ENCODE measurements at regions of chr4 and their contacts with region 1.

Region 1: GRCh38 chr4:39181905-39182638 is at the start of gene WDR19:
- DNase-seq: peak; percentile 91 to 98 (median 98)
- ATAC-seq: peak; percentile 98
- H3K4me3 ChIP-seq: peak within 1 kb of the TSS; percentile 91
- H3K4me3 Mint-ChIP-seq: no peak within 1 kb of the TSS
- H3K27ac ChIP-seq: peak within 1 kb of the TSS; percentile 72
- H3K27ac Mint-ChIP-seq: peak within 1 kb of the TSS in 4 of 9 donors; percentile 8 to 47 (median 21)
- H3K4me1 ChIP-seq: peaks cover 3 to 12% of the 10 kb centered on the region in 2 donors
- H3K4me1 Mint-ChIP-seq: peaks cover 0 to 12% (median 9%) of the 10 kb centered on the region in 7 donors
- H3K27me3 ChIP-seq: no peaks in the 10 kb centered on the region
- H3K27me3 Mint-ChIP-seq: peaks cover 0 to 16% (median 3%) of the 10 kb centered on the region in 5 donors
- total RNA-seq, gene WDR19: 14.0 to 44.3 (median 15.4) TPM

Region 2: DNA sequence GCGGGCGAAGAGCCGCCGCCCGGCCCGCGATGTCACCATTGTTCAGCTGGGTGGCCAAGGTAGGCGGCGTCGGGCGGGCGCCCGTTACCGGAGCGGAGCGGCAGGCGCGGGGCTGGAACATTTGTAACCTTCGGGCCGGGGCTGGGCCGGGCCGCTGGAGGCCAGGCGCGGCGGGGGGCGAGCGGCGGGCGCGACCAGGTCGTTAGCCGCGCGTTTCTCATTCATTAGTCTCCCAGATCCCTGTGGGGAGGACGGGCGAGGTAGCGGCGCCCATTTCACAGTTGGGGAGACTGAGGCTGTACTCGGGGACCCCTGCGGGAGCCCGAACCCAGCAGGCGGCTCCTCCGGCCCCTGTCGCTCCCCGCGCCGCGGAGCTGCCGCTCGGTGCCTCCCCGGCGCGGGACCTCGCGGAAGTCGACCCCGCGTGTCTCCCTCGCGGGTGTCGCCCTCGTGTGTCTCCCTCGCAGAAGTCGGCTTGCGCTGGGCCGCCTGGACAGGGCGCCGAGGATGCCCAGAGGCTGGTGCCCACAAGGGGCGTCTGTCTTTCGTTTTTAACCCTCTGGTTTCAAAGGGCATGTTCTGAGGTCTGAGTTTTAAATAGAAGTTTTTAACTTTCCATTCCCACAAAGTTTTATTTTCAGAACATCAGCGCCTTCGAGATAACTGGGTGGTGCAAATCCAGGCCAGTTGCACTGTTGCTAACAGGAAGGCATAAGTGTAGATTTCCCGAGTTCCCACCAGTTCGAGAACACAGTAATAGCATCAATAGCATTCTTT is 1204.4 kb before region 1 on chr4:
- CTCF ChIA-PET with region 1: no interaction called
- POLR2A ChIA-PET with region 1: no interaction called
- intact Hi-C with region 1: loop called in 1 of 2 experiments (anchors 1 kb)
- DNase-seq: peak; percentile 56 to 75 (median 70)
- ATAC-seq: peak; percentile 87
- H3K4me3 ChIP-seq: peak overlapping the region; percentile 69
- H3K4me3 Mint-ChIP-seq: peak overlapping the region; percentile 74 to 91 (median 84)
- H3K27ac ChIP-seq: peak overlapping the region; percentile 85
- H3K27ac Mint-ChIP-seq: peak overlapping the region; percentile 51 to 90 (median 78)
- H3K4me1 ChIP-seq: peaks cover 9 to 13% of the 10 kb centered on the region in 2 donors
- H3K4me1 Mint-ChIP-seq: peaks cover 14 to 40% (median 34%) of the 10 kb centered on the region in 7 donors
- H3K27me3 ChIP-seq: no peaks in the 10 kb centered on the region
- H3K27me3 Mint-ChIP-seq: no peaks in the 10 kb centered on the region

Region 3: DNA sequence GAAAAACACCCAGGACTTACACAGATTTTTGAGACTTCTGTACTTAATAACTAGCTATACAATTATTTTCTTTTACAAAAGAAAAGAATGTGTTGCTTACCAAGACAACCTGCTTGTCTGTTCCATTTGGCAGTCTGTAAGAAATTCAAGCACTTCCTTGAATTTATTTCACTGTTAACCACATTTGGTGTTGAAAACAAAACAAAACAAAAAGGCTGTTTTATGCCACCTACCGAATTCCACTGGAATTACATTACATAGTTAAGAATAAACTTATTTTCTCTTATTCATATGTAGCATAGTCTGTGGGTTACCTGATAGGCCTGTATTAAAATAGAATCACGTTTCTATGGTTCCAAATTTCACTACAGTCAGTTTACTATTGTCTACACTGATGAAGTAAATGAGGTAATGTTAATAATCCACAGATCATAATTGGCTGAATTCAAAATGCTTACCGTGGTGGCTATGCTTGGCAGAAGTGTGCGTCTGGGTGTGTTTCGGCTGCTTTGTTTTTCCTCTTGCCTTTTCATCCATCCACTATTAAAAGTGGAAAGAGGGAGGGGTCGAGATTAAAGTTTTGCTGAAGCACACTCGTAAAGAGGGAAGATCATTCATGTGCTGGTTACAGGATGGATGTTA is 377.3 kb before region 1 on chr4 and contains the start of gene TLR1:
- CTCF ChIA-PET with region 1: no interaction called
- POLR2A ChIA-PET with region 1: no interaction called
- intact Hi-C with region 1: loop called in 1 of 2 experiments (anchors 1 kb)
- DNase-seq: peak in 7 of 9 donors; percentile 50 to 76 (median 65)
- ATAC-seq: peak; percentile 88
- H3K4me3 ChIP-seq: peak within 1 kb of the TSS; percentile 51
- H3K4me3 Mint-ChIP-seq: peak within 1 kb of the TSS; percentile 87 to 95 (median 90)
- H3K27ac ChIP-seq: peak within 1 kb of the TSS; percentile 61
- H3K27ac Mint-ChIP-seq: peak within 1 kb of the TSS; percentile 87 to 99 (median 94)
- H3K4me1 ChIP-seq: peaks cover 8 to 12% of the 10 kb centered on the region in 2 donors
- H3K4me1 Mint-ChIP-seq: peaks cover 27 to 46% (median 39%) of the 10 kb centered on the region in 7 donors
- H3K27me3 ChIP-seq: no peaks in the 10 kb centered on the region
- H3K27me3 Mint-ChIP-seq: peaks cover 0 to 2% (median 0%) of the 10 kb centered on the region in 5 donors
- total RNA-seq, gene TLR1: 11.8 to 41.9 (median 17.7) TPM

Region 4: GRCh38 chr4:39032218-39033085 is 149.6 kb before region 1 on chr4 and contains the start of gene TMEM156:
- CTCF ChIA-PET with region 1: no interaction called
- POLR2A ChIA-PET with region 1: no interaction called
- intact Hi-C with region 1: loop called in 1 of 2 experiments (anchors 1 kb)
- DNase-seq: peak in 7 of 9 donors; percentile 59 to 77 (median 70)
- ATAC-seq: peak; percentile 93
- H3K4me3 ChIP-seq: peak within 1 kb of the TSS; percentile 61
- H3K4me3 Mint-ChIP-seq: peak within 1 kb of the TSS; percentile 65 to 89 (median 82)
- H3K27ac ChIP-seq: peak within 1 kb of the TSS; percentile 55
- H3K27ac Mint-ChIP-seq: peak within 1 kb of the TSS; percentile 19 to 93 (median 87)
- H3K4me1 ChIP-seq: peaks cover 29 to 45% of the 10 kb centered on the region in 2 donors
- H3K4me1 Mint-ChIP-seq: peaks cover 16 to 55% (median 44%) of the 10 kb centered on the region in 7 donors
- H3K27me3 ChIP-seq: no peaks in the 10 kb centered on the region
- H3K27me3 Mint-ChIP-seq: no peaks in the 10 kb centered on the region
- total RNA-seq, gene TMEM156: 8.6 to 36.4 (median 9.4) TPM

Region 5: DNA sequence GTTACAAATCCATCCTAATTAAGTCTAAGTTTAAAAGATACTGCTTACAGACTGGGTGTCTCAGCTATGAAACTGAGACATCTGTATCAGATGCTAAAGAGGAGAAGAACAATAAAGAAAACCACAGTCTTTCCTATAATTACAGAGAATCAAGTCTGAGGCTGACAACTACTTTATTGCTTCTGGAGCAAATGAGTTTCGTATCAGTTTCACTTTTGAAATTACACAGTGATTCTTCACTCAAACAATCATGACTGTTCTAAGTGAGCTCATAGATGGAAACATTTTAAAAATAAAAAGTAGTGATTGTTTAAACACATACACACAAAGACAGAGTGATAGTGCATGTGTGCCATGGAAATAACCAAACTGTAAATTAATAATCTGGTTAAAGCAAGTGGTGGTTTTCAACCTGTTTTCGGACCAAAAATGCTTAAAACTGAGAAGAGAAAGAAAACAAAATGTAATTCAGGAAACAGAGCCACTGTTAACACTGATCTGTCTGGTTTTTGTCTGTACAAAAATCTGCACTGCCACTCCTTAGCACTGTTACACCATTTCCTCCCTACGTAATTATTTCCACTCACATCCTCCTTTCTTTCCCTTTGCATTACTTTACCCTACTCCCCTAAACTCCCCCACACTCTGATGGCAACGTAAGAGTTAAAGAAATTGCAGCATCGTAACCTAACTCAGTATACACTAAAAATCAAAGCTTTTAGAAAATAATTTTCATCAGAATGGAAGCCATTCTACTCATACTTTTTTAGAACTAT is 171.6 kb after region 1 on chr4:
- CTCF ChIA-PET with region 1: no interaction called
- POLR2A ChIA-PET with region 1: no interaction called
- intact Hi-C with region 1: loop called (anchors 1 to 2 kb)
- DNase-seq: peak in 7 of 9 donors; percentile 39 to 71 (median 63)
- ATAC-seq: peak; percentile 86
- H3K4me3 ChIP-seq: peak overlapping the region; percentile 48
- H3K4me3 Mint-ChIP-seq: peak overlapping the region; percentile 82 to 89 (median 84)
- H3K27ac ChIP-seq: peak overlapping the region; percentile 70
- H3K27ac Mint-ChIP-seq: peak overlapping the region; percentile 88 to 98 (median 95)
- H3K4me1 ChIP-seq: peaks cover 17 to 34% of the 10 kb centered on the region in 2 donors
- H3K4me1 Mint-ChIP-seq: peaks cover 20 to 75% (median 59%) of the 10 kb centered on the region in 7 donors
- H3K27me3 ChIP-seq: no peaks in the 10 kb centered on the region
- H3K27me3 Mint-ChIP-seq: no peaks in the 10 kb centered on the region

Region 6: DNA sequence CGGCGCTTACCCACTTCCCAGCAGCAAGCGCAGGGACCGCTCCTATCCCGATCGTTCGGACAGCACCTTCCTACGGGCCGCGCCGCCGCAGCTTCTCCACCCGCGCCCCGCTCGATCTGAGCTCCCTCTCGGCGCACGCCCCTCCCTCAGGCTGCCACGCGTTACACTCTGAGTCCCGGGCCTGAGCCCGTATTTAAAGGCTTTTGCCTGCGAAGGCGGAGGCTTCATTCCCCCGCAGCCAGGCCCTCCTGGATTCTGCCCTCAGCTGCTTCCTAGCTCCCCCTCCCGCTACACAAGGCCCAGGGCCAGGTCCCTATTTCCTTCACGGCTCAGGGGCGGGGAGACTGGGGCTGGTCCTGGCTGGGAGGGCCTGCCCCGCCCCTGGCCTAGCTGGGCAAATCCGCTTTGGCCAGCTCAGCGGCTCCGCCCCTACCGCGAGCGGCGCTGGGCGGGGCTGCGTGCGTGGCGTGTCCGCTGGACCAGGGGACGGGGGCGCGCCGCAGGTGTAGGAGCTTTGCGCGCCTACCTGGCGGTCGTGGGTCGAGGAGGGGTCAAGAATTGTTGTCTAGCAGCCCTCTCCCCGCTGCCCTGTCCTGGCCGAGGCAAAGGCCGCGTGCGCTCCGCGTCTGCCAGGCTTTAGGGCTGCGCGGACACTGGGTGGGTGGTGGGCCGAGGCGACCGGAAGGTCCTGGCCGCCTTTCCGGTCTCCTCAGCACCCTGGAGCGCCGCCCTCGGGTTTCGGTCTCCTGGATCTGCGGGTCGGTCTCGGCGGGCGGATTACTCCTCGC is 345.4 kb after region 1 on chr4 and contains the start of gene UGDH:
- CTCF ChIA-PET with region 1: no interaction called
- POLR2A ChIA-PET with region 1: interaction called, 4 read pairs
- intact Hi-C with region 1: loop called (anchors 1 kb)
- DNase-seq: peak; percentile 85 to 95 (median 88)
- ATAC-seq: peak; percentile 99
- H3K4me3 ChIP-seq: peak within 1 kb of the TSS; percentile 81
- H3K4me3 Mint-ChIP-seq: peak within 1 kb of the TSS; percentile 88 to 99 (median 98)
- H3K27ac ChIP-seq: peak within 1 kb of the TSS; percentile 74
- H3K27ac Mint-ChIP-seq: peak within 1 kb of the TSS; percentile 84 to 97 (median 93)
- H3K4me1 ChIP-seq: peaks cover 7 to 10% of the 10 kb centered on the region in 2 donors
- H3K4me1 Mint-ChIP-seq: peaks cover 11 to 26% (median 19%) of the 10 kb centered on the region in 7 donors
- H3K27me3 ChIP-seq: no peaks in the 10 kb centered on the region
- H3K27me3 Mint-ChIP-seq: no peaks in the 10 kb centered on the region
- total RNA-seq, gene UGDH: 6.9 to 20.9 (median 17.7) TPM

Region 7: GRCh38 chr4:39568815-39569608 is 386.9 kb after region 1 on chr4:
- CTCF ChIA-PET with region 1: no interaction called
- POLR2A ChIA-PET with region 1: no interaction called
- intact Hi-C with region 1: no loop called
- DNase-seq: no peak
- ATAC-seq: no peak
- H3K4me3 ChIP-seq: no peak overlapping the region
- H3K4me3 Mint-ChIP-seq: no peak overlapping the region
- H3K27ac ChIP-seq: no peak overlapping the region
- H3K27ac Mint-ChIP-seq: no peak overlapping the region
- H3K4me1 ChIP-seq: no peaks in the 10 kb centered on the region
- H3K4me1 Mint-ChIP-seq: peaks cover 0 to 4% (median 0%) of the 10 kb centered on the region in 7 donors
- H3K27me3 ChIP-seq: no peaks in the 10 kb centered on the region
- H3K27me3 Mint-ChIP-seq: no peaks in the 10 kb centered on the region